Natural killer cell (primary cell): ENCODE measurements at regions of chr21 and their contacts with region 1.

Region 1: GRCh38 chr21:42233067-42233961 is 14.4 kb downstream of the ABCG1 start:
- DNase-seq: peak; percentile 76 to 93
- ATAC-seq: peak; percentile 62 to 82 (median 67)
- H3K4me3 ChIP-seq: no peak overlapping the region
- H3K4me3 Mint-ChIP-seq: peak overlapping the region; percentile 83
- H3K27ac ChIP-seq: peak overlapping the region; percentile 89
- H3K27ac Mint-ChIP-seq: peak overlapping the region; percentile 89 to 93
- H3K4me1 ChIP-seq: peaks cover 92% of the 10 kb centered on the region
- H3K4me1 Mint-ChIP-seq: peaks cover 63 to 75% of the 10 kb centered on the region in 2 donors
- H3K27me3 ChIP-seq: no peaks in the 10 kb centered on the region
- H3K27me3 Mint-ChIP-seq: no peaks in the 10 kb centered on the region
- CTCF ChIP-seq: peak; percentile 68

Region 2: GRCh38 chr21:42151091-42151947 is 82.0 kb before region 1 on chr21:
- intact Hi-C with region 1: loop called (anchors 5 kb)
- DNase-seq: peak in 1 of 2 donors; percentile 12
- ATAC-seq: no peak
- H3K4me3 ChIP-seq: no peak overlapping the region
- H3K4me3 Mint-ChIP-seq: no peak overlapping the region
- H3K27ac ChIP-seq: no peak overlapping the region
- H3K27ac Mint-ChIP-seq: no peak overlapping the region
- H3K4me1 ChIP-seq: peaks cover 22% of the 10 kb centered on the region
- H3K4me1 Mint-ChIP-seq: peaks cover 25 to 27% of the 10 kb centered on the region in 2 donors
- H3K27me3 ChIP-seq: no peaks in the 10 kb centered on the region
- H3K27me3 Mint-ChIP-seq: peaks cover 3 to 7% of the 10 kb centered on the region in 2 donors
- CTCF ChIP-seq: no peak

Region 3: GRCh38 chr21:42187976-42188653 is 45.2 kb before region 1 on chr21:
- intact Hi-C with region 1: loop called (anchors 1 kb)
- DNase-seq: peak; percentile 70 to 94
- ATAC-seq: peak; percentile 75 to 93 (median 83)
- H3K4me3 ChIP-seq: no peak overlapping the region
- H3K4me3 Mint-ChIP-seq: peak overlapping the region; percentile 22
- H3K27ac ChIP-seq: peak overlapping the region; percentile 89
- H3K27ac Mint-ChIP-seq: peak overlapping the region; percentile 77 to 87
- H3K4me1 ChIP-seq: peaks cover 81% of the 10 kb centered on the region
- H3K4me1 Mint-ChIP-seq: peaks cover 75% of the 10 kb centered on the region in 2 donors
- H3K27me3 ChIP-seq: no peaks in the 10 kb centered on the region
- H3K27me3 Mint-ChIP-seq: no peaks in the 10 kb centered on the region
- CTCF ChIP-seq: no peak

Region 4: GRCh38 chr21:42193131-42193671 is 40.1 kb before region 1 on chr21:
- intact Hi-C with region 1: loop called (anchors 1 kb)
- DNase-seq: peak; percentile 68 to 74
- ATAC-seq: peak; percentile 31 to 49 (median 40)
- H3K4me3 ChIP-seq: no peak overlapping the region
- H3K4me3 Mint-ChIP-seq: peak overlapping the region; percentile 88
- H3K27ac ChIP-seq: peak overlapping the region; percentile 24
- H3K27ac Mint-ChIP-seq: peak overlapping the region; percentile 75 to 91
- H3K4me1 ChIP-seq: peaks cover 74% of the 10 kb centered on the region
- H3K4me1 Mint-ChIP-seq: peaks cover 60 to 70% of the 10 kb centered on the region in 2 donors
- H3K27me3 ChIP-seq: no peaks in the 10 kb centered on the region
- H3K27me3 Mint-ChIP-seq: no peaks in the 10 kb centered on the region
- CTCF ChIP-seq: no peak

Region 5: DNA sequence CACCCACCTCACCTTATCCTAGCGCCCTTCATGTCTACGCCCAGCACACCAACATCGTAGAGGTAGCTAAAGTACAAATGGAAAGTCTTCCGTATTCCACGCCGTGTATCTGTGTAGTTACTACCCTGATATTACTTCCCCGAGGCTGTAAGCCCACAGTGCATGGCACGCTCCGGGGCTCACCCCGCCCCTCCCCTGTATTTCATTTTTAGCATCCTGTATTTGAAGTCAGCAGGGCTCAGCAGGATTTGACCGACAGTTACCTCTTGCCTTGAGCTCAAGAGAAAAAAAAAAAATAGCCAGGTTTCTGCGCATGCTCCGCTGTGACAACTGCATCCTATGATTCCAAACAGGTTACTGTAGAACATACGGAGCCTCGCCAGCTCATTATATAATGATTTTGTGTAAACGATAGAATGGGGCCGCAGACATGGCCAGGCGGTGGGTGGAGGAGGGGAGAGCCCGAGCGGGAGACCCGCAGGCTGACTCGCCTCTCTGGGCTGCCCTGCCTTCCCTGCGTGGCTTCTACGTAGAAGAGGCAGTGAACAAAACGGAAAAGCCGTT is 13.1 kb before region 1 on chr21:
- intact Hi-C with region 1: loop called (anchors 1 kb)
- DNase-seq: peak; percentile 67 to 96
- ATAC-seq: peak; percentile 81 to 91 (median 84)
- H3K4me3 ChIP-seq: peak overlapping the region; percentile 64
- H3K4me3 Mint-ChIP-seq: peak overlapping the region; percentile 95
- H3K27ac ChIP-seq: peak overlapping the region; percentile 74
- H3K27ac Mint-ChIP-seq: peak overlapping the region; percentile 77 to 92
- H3K4me1 ChIP-seq: peaks cover 35% of the 10 kb centered on the region
- H3K4me1 Mint-ChIP-seq: peaks cover 17 to 28% of the 10 kb centered on the region in 2 donors
- H3K27me3 ChIP-seq: no peaks in the 10 kb centered on the region
- H3K27me3 Mint-ChIP-seq: peaks cover 0 to 8% of the 10 kb centered on the region in 2 donors
- CTCF ChIP-seq: no peak

Region 6: DNA sequence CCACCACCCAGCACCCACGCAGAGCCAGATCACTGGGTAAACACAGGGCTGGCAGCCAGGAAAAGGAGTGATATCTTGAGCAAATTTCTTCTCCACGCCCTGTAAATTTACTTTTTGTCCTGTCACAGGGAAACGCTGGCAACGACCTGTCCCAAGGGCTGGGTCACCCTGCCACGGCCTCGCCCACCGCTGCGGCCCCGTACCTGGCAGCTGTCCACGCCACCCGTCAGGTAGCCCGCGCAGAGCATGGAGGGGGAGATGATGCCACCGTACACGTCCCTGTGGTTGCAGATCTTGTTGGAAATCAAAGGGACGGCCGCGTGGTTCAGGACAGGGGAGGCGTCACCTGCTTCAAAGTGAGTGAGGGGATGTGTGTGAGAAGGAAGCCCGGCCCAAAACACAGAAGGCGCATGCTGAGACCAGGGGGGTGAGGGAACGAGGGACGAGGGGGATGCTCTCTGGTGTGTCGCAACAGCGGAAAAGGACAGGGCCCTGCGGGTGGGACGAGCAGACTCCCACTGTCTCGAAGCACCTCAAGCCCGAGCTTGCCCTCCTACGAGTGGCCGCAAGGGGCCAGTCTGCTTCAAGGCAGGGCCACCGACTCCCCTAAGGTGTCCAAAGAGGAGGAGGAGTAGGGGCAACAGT is 143.1 kb after region 1 on chr21:
- intact Hi-C with region 1: no loop called
- DNase-seq: no peak
- ATAC-seq: peak in 1 of 3 donors; percentile 57
- H3K4me3 ChIP-seq: no peak overlapping the region
- H3K4me3 Mint-ChIP-seq: no peak overlapping the region
- H3K27ac ChIP-seq: no peak overlapping the region
- H3K27ac Mint-ChIP-seq: no peak overlapping the region
- H3K4me1 ChIP-seq: no peaks in the 10 kb centered on the region
- H3K4me1 Mint-ChIP-seq: peaks cover 0 to 4% of the 10 kb centered on the region in 2 donors
- H3K27me3 ChIP-seq: no peaks in the 10 kb centered on the region
- H3K27me3 Mint-ChIP-seq: peaks cover 30 to 54% of the 10 kb centered on the region in 2 donors
- CTCF ChIP-seq: no peak